Activated CD4-positive, alpha-beta T cell treated with anti-CD3 and anti-CD28 coated beads, Interleukin-2, amount 10 ng/mL, durations not matched to agents 7 days and 5 days (primary cell): ENCODE measurements at regions of chr12 and their contacts with region 1.

Region 1: DNA sequence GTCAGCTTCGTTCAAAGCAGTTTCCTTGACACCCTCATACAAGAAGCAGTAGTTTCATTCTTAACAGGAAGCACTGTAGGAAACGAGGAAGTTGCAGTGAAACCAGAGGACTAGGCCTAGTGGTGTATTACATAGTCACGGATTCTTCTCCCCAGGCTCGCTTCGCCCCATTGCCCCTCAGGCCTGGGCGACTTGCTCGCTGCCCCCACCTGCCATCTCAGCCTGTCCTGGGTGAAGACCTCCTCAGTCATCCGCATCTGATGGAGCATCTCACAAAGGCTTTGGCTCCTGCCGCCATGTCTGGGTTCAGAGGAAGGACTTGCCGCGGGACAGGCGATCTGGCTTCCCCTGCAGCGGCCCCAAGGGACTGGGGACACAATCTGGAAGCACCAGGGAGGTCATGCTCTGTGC is 93.5 kb downstream of the LMNTD1 start:
- DNase-seq: no peak
- H3K4me3 Mint-ChIP-seq: no peak overlapping the region
- H3K27ac Mint-ChIP-seq: no peak overlapping the region
- H3K4me1 Mint-ChIP-seq: no peaks in the 10 kb centered on the region
- H3K27me3 Mint-ChIP-seq: peaks cover 6% of the 10 kb centered on the region

Region 2: DNA sequence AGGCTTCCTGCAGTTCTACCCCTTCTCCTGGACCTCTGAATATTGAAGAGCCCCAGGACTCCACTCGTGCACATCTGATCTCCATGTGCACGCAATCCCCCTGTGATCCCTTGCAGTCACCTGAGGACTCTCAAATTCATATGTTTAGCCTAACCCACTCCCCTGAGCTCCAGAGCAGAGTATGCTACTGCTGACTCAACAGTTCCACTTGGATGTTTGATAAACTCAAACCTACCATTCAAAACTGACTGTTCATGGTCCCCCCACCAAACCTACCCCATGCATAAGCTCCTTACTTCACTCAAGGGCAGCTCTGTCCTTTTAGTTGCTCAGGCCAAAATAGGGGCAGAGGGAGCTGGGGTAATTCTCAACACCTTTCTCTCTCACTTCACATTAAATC is 360.5 kb before region 1 on chr12:
- CTCF ChIA-PET with region 1: no interaction called
- POLR2A ChIA-PET with region 1: interaction called, 19 read pairs
- DNase-seq: no peak
- H3K4me3 Mint-ChIP-seq: no peak overlapping the region
- H3K27ac Mint-ChIP-seq: no peak overlapping the region
- H3K4me1 Mint-ChIP-seq: peaks cover 4% of the 10 kb centered on the region
- H3K27me3 Mint-ChIP-seq: no peaks in the 10 kb centered on the region